Activated CD4-positive, alpha-beta T cell treated with anti-CD3 and anti-CD28 coated beads for 36 hours (primary cell): ENCODE measurements at regions of chr10 and their contacts with region 1.

Region 1: DNA sequence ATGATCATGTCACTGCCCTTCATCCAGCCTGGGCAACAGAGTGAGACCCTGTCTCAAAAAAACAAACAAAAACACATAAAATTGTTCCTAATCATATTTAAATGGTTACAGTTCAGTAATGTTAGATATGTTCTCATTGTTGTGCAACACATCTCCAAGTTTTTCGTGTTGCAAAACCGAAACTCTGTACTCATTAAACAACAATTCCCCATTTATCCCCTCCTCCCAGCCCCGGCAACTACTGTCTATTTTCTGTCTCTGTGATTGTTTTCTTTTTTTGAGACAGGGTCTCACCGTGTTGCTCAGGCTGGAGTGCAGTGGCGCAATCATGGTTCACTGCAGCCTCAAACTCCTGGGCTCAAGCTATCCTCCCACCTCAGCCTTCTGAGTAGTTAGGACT is 16.1 kb upstream of the PRXL2A start:
- DNase-seq: no peak
- ATAC-seq: no peak
- H3K4me3 Mint-ChIP-seq: no peak overlapping the region
- H3K27ac Mint-ChIP-seq: no peak overlapping the region
- H3K4me1 Mint-ChIP-seq: no peaks in the 10 kb centered on the region
- H3K27me3 Mint-ChIP-seq: no peaks in the 10 kb centered on the region

Region 2: DNA sequence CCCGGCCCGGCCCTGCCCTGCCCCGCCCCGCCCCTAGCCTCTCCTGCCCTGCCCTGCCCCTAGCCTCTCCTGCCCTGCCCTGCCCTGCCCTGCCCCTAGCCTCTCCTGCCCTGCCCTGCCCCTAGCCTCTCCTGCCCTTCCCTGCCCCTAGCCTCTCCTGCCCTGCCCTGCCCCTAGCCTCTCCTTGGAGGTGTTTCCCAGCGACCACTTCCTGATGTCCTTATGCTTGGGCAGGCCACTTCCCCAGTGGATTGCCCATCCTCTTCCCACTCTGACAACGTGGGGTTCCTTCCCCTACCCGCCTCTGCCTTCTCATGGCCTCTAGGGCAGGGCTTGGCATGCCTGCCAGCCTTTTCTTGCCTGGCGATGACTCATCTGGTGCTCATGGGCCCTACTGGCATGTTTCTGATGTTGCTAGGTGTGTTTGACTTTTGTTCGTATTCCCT is 37.3 kb after region 1 on chr10:
- CTCF ChIA-PET with region 1: no interaction called
- POLR2A ChIA-PET with region 1: no interaction called
- intact Hi-C with region 1: loop called in 1 of 2 experiments (anchors 2 kb)
- DNase-seq: peak; percentile 36
- ATAC-seq: no peak
- H3K4me3 Mint-ChIP-seq: no peak overlapping the region
- H3K27ac Mint-ChIP-seq: no peak overlapping the region
- H3K4me1 Mint-ChIP-seq: no peaks in the 10 kb centered on the region
- H3K27me3 Mint-ChIP-seq: no peaks in the 10 kb centered on the region